ENCODE measurements at regions of chr3 and their contacts with region 1.

Region 1: GRCh38 chr3:120348981-120349818 is at the start of gene LRRC58:
- DNase-seq: peak; percentile 90
- H3K4me3 Mint-ChIP-seq: peak within 1 kb of the TSS; percentile 94
- H3K27ac Mint-ChIP-seq: peak within 1 kb of the TSS; percentile 79
- H3K4me1 Mint-ChIP-seq: peaks cover 24% of the 10 kb centered on the region
- H3K27me3 Mint-ChIP-seq: no peaks in the 10 kb centered on the region
- CTCF ChIP-seq: no peak
- total RNA-seq, gene LRRC58: 19.9 and 20.8 TPM in 2 replicates

Region 2: GRCh38 chr3:120239644-120240043 is 109.6 kb before region 1 on chr3:
- CTCF ChIA-PET with region 1: interaction called, 3 read pairs
- intact Hi-C with region 1: loop called (anchors 5 kb)
- DNase-seq: no peak
- H3K4me3 Mint-ChIP-seq: no peak overlapping the region
- H3K27ac Mint-ChIP-seq: no peak overlapping the region
- H3K4me1 Mint-ChIP-seq: no peaks in the 10 kb centered on the region
- H3K27me3 Mint-ChIP-seq: peaks cover 57% of the 10 kb centered on the region
- CTCF ChIP-seq: no peak

Region 3: DNA sequence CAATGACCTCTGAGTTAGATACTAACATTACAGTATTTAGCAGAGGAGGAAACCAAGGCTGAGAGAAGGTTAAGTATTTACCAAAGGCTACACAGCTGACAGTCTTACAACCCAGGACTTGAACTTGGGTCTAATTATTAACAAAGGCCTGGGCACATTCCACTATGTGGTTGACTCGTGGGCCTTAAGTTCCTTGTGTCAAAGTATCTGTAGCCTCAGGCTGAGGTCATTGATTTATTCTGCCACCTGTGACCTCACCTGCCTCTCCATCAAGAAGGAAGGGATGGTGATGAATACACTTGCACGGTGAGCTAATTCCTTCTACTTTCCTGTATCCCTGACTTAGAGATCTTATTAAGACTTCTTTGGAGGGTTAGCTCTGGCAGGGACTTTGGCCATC is 19.8 kb after region 1 on chr3:
- CTCF ChIA-PET with region 1: interaction called, 6 read pairs
- intact Hi-C with region 1: loop called (anchors 2 kb)
- DNase-seq: peak; percentile 65
- H3K4me3 Mint-ChIP-seq: no peak overlapping the region
- H3K27ac Mint-ChIP-seq: no peak overlapping the region
- H3K4me1 Mint-ChIP-seq: peaks cover 21% of the 10 kb centered on the region
- H3K27me3 Mint-ChIP-seq: no peaks in the 10 kb centered on the region
- CTCF ChIP-seq: no peak